ENCODE measurements at regions of chr7 and their contacts with region 1.

Region 1: DNA sequence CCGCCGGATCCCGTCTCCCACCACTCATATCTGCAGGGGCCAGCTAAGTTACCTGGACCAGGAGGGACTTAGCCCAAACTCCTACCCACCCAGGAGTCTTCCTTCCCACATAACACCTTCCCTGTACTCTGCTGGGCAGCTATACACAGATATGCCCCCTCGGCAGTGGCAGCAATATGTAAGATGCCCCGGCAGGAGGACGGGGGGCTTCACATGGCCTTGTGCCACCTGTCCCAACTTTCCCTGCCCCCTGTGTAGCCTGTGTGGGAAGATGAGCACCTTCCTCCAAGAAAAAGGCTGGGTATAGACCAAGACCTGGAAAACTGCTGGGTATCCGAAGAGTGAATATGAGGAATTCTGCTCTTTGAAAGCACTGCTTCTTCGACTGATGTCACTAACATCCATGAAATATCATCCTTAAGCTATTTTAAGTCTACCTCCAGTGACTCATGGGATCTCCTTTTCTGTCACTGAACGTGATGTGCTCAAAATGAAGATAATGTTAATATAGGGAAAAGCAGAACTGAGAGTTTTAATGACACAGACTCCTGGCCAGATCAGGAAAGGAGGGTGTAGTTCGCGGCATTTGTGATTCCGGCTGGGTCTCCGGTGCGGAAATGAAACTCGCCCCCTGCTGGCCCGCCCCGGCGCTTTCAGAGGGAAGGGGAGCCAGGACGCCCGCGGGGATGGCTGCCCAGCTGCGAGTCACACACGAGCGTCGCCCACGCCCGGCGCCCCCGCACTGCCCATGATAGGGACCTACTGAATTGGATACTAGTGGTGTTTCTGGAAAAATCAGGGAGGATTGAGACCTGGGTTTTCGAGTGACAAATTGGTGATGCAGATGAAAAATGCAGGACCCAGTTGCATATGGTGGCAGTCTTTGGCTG is 256.9 kb upstream of the NFE2L3 start:
- DNase-seq: peak; percentile 79 to 86 (median 83)
- H3K4me3 ChIP-seq: peak overlapping the region; percentile 40 to 52 (median 46)
- H3K27ac ChIP-seq: no peak overlapping the region
- H3K4me1 ChIP-seq: peaks cover 0 to 8% (median 0%) of the 10 kb centered on the region in 3 donors
- H3K27me3 ChIP-seq: no peaks in the 10 kb centered on the region
- CTCF ChIP-seq: peak; percentile 64

Region 2: GRCh38 chr7:26365077-26365900 is 470.1 kb after region 1 on chr7:
- intact Hi-C with region 1: loop called (anchors 10 kb)
- DNase-seq: peak in 4 of 5 donors; percentile 79 to 94 (median 88)
- H3K4me3 ChIP-seq: peak overlapping the region in 1 of 3 donors; percentile 13
- H3K27ac ChIP-seq: peak overlapping the region; percentile 43 to 86
- H3K4me1 ChIP-seq: peaks cover 6 to 19% (median 16%) of the 10 kb centered on the region in 3 donors
- H3K27me3 ChIP-seq: no peaks in the 10 kb centered on the region
- CTCF ChIP-seq: peak; percentile 84

Region 3: DNA sequence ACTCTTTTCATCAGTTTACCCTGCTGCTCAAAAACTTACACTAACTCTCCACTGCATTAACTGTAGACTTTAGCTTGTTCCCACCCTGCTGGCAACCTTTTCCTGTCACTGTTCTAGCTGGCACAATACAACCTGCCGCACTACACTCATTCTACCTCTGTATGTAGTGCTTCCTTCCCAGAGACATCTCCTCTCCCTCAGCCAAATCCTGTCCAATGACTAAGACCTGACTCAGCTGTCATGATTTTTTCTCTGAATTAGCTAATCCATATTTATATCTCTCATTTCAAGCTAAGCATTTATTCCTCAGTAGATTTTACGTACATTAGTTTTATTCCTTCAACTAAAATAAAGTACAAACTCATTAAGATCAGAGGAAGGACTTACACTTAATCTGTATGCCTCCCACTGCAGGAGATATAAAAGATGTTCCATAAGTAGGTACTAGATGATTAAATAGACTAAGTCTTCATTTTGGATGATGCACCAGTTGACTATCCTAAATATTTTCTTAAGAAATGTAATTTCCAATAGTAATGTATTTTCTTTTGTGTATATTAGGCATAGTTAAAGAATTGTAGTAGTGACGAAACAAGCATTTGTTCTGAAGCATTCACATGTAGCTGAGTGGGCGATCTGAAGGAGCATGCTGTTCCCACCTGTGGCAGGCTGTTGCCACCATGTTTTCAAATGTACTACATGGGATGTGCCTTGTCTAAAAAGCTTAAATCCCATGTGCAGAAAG is 780.2 kb after region 1 on chr7:
- intact Hi-C with region 1: loop called (anchors 5 kb)
- DNase-seq: no peak
- H3K4me3 ChIP-seq: no peak overlapping the region
- H3K27ac ChIP-seq: no peak overlapping the region
- H3K4me1 ChIP-seq: peaks cover 0 to 4% (median 3%) of the 10 kb centered on the region in 3 donors
- H3K27me3 ChIP-seq: no peaks in the 10 kb centered on the region
- CTCF ChIP-seq: no peak